ENCODE measurements at regions of chr11 and their contacts with region 1.

Region 1: DNA sequence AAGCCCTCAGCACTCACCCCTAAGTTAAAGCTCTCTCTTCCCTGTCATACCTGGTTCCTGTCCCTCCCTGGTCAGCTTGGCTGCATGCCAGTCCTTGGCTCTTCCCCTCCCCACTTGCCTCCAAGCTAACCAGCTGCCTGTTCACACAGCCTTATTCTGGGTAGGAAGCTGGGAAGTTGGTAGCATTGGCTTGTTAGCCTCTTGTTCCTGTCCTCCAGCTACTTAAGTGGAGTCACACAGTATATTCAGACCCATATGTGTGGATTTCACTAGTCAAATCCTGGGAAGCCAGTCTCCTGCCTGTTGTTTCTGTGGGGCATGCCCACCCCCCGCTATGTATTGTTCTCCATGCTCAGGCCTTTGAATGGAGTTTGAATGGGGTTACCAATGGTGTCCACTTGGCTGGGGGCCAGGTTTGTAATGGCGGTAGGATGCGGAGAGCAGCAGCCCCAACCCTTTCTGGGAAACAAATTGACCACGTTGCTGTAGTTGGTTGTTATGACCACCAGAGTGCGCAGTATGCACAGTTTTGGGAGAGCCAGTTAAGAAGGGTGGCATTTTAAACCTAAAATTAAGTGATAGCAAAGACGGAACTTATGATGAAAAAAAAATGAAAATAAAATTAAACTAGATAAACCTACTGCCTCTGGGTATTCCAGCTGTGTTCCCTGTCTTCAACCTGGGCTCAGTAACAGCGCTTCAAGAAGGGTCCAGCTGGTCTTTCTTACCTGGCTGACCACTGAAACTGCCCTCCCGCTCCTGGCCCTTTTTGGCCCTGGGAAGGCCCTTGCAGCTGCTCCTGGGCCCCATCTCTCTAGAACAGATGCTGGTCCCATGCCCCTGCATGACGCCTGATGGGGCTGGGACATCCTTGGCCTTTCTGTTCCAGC is 10.7 kb upstream of the RPS3 start:
- DNase-seq: peak; percentile 45
- H3K4me3 ChIP-seq: no peak overlapping the region
- H3K27ac ChIP-seq: peak overlapping the region; percentile 11
- H3K27me3 ChIP-seq: peaks cover 9% of the 10 kb centered on the region
- CTCF ChIP-seq: peak; percentile 86

Region 2: DNA sequence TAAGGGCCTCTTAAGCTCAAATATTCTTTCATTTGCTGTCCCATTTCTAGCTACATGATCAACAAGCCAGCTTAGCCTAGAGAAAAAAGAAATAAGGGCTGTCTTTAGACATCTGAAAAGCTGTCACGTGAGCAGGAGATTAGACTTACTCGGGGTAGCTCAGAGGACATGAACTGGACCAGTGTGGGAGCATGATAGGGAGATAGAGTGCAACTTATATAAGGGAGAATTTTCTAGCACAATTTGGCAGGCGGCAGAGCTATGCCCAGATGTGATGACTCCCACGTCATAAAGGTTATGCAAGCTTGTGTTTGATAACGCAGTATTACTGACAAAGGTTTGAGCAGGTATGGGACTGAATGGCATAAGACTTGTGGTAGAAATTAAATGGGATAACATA is 176.2 kb before region 1 on chr11:
- CTCF ChIA-PET with region 1: no interaction called
- POLR2A ChIA-PET with region 1: no interaction called
- DNase-seq: no peak
- H3K4me3 ChIP-seq: no peak overlapping the region
- H3K27ac ChIP-seq: no peak overlapping the region
- H3K27me3 ChIP-seq: peaks cover 23% of the 10 kb centered on the region
- CTCF ChIP-seq: no peak

Region 3: DNA sequence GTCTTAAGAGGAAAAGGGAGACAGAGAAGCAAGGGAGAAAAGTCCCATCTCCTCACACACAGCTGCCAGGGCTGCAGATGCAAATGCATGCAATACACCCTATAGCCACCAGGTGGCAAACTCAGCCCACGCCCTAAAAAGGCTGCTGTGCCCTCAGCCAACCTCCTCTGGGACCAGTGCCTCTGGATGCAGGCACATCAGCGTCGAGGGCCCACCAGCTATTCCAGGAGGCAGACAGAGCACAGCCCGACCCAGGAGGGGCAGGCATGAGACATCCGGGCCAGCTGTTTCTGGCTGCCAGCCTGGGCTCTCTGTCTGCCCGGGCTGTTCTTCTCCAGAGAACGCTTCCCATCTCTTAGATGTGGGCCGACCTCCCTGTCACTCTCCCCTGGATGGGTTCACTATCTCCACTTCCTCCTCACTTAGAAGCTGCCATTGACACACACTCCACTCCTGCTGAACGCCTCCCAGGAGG is 108.4 kb before region 1 on chr11:
- CTCF ChIA-PET with region 1: interaction called, 157 read pairs
- POLR2A ChIA-PET with region 1: interaction called, 7 read pairs
- DNase-seq: peak; percentile 55
- H3K4me3 ChIP-seq: no peak overlapping the region
- H3K27ac ChIP-seq: no peak overlapping the region
- H3K27me3 ChIP-seq: no peaks in the 10 kb centered on the region
- CTCF ChIP-seq: peak; percentile 97

Region 4: GRCh38 chr11:75351791-75352587 is 36.6 kb before region 1 on chr11:
- CTCF ChIA-PET with region 1: interaction called, 10 read pairs
- POLR2A ChIA-PET with region 1: interaction called, 9 read pairs
- DNase-seq: no peak
- H3K4me3 ChIP-seq: peak overlapping the region; percentile 87
- H3K27ac ChIP-seq: no peak overlapping the region
- H3K27me3 ChIP-seq: no peaks in the 10 kb centered on the region
- CTCF ChIP-seq: peak; percentile 6; the same call in 1 of the 2 replicates

Region 5: GRCh38 chr11:75399344-75400145 is 10.9 kb after region 1 on chr11 and contains the start of gene RPS3:
- CTCF ChIA-PET with region 1: interaction called, 14 read pairs
- POLR2A ChIA-PET with region 1: interaction called, 5 read pairs
- DNase-seq: peak; percentile 79
- H3K4me3 ChIP-seq: peak within 1 kb of the TSS; percentile 99
- H3K27ac ChIP-seq: peak within 1 kb of the TSS; percentile 90
- H3K27me3 ChIP-seq: peaks cover 7% of the 10 kb centered on the region
- CTCF ChIP-seq: no peak; the same call in 1 of the 2 replicates
- polyA plus RNA-seq, gene RPS3: 2,915 and 3,250 TPM in 2 replicates

Measured in AG04450 (cell line).